ENCODE measurements at regions of chr17 and their contacts with region 1.

Region 1: GRCh38 chr17:69761751-69762321 is 313.2 kb upstream of the KCNJ16 start:
- DNase-seq: no peak
- H3K4me3 ChIP-seq: no peak overlapping the region
- H3K27ac ChIP-seq: no peak overlapping the region
- H3K4me1 ChIP-seq: no peaks in the 10 kb centered on the region
- H3K27me3 ChIP-seq: no peaks in the 10 kb centered on the region
- CTCF ChIP-seq: no peak
- POLR2A ChIP-seq: no peak

Region 2: GRCh38 chr17:69796078-69796477 is 34.2 kb after region 1 on chr17:
- intact Hi-C with region 1: no loop called
- DNase-seq: no peak
- H3K4me3 ChIP-seq: no peak overlapping the region
- H3K27ac ChIP-seq: no peak overlapping the region
- H3K4me1 ChIP-seq: no peaks in the 10 kb centered on the region
- H3K27me3 ChIP-seq: no peaks in the 10 kb centered on the region
- CTCF ChIP-seq: no peak
- POLR2A ChIP-seq: no peak

Region 3: DNA sequence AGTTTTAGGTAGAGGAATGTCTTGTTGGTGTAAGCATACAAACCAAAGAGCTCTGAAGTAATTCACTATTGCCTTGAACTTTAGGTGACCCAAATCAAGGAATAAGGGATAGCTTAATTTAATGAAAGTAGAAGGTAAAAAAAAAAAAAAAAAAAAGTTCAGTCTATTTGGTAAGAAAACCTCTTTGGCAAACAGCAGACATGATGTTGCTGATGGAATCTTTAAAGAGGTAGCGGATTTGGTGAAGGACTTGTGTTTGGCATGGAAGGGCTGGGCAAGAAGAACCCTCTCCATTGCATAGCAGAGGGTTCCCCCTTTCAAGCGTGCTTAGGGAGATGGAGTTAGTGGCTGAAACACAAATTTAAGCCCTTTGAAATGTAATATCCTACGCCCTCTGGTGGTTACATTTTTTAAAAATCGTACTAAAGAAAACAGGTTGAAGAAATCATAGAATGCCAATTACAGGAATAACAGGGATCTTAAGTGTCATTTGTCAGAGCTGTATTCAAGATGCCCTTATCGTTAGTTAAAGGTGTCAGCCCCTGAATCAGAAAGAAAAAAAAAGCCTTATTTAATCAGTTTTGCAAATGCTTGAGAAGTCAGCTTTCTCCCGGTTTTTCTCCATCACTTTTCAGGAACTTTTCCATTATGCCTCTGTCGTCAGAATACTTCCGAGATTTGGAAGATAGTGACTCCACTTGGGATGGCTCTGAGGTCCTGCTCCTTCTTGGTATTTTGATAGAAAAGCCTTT is 790.6 kb after region 1 on chr17:
- intact Hi-C with region 1: no loop called
- DNase-seq: no peak
- H3K4me3 ChIP-seq: no peak overlapping the region
- H3K27ac ChIP-seq: no peak overlapping the region
- H3K4me1 ChIP-seq: no peaks in the 10 kb centered on the region
- H3K27me3 ChIP-seq: no peaks in the 10 kb centered on the region
- CTCF ChIP-seq: peak; percentile 49 to 68 (median 63)
- POLR2A ChIP-seq: no peak

Region 4: DNA sequence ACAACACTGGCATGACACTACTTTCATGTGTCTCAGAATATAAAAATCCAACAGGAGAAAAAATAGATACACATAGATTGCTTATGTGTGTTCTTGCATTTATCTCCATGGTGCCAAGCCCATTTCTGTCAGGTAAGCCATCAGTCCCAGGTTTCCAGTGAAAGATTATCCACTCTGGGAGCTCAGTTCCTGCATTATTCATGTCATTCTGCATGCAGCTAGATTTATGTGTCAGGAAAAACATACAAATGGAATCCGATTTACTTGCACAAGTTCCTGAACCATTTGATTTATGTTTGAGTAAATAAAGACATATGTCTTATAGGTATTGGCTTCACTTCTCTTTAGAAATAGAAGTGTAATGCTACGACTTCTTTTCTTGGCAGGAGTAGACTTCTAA is 977.2 kb after region 1 on chr17:
- intact Hi-C with region 1: loop called (anchors 5 kb)
- DNase-seq: no peak
- H3K4me3 ChIP-seq: no peak overlapping the region
- H3K27ac ChIP-seq: no peak overlapping the region
- H3K4me1 ChIP-seq: no peaks in the 10 kb centered on the region
- H3K27me3 ChIP-seq: peaks cover 0 to 7% of the 10 kb centered on the region in 2 donors
- CTCF ChIP-seq: no peak
- POLR2A ChIP-seq: no peak

Measured in breast epithelium (tissue), 4 donors.